ENCODE measurements at regions of chr1 and their contacts with region 1.

Region 1: GRCh38 chr1:13813398-13814012 is 113.5 kb downstream of the PRDM2 start:
- DNase-seq: peak; percentile 34 to 69 (median 54)
- ATAC-seq: peak; percentile 59
- H3K4me3 ChIP-seq: no peak overlapping the region
- H3K4me3 Mint-ChIP-seq: no peak overlapping the region
- H3K27ac ChIP-seq: no peak overlapping the region
- H3K27ac Mint-ChIP-seq: no peak overlapping the region
- H3K4me1 ChIP-seq: peaks cover 7% of the 10 kb centered on the region
- H3K4me1 Mint-ChIP-seq: peaks cover 39% of the 10 kb centered on the region
- H3K27me3 ChIP-seq: no peaks in the 10 kb centered on the region
- H3K27me3 Mint-ChIP-seq: no peaks in the 10 kb centered on the region
- CTCF ChIP-seq: peak; percentile 61

Region 2: DNA sequence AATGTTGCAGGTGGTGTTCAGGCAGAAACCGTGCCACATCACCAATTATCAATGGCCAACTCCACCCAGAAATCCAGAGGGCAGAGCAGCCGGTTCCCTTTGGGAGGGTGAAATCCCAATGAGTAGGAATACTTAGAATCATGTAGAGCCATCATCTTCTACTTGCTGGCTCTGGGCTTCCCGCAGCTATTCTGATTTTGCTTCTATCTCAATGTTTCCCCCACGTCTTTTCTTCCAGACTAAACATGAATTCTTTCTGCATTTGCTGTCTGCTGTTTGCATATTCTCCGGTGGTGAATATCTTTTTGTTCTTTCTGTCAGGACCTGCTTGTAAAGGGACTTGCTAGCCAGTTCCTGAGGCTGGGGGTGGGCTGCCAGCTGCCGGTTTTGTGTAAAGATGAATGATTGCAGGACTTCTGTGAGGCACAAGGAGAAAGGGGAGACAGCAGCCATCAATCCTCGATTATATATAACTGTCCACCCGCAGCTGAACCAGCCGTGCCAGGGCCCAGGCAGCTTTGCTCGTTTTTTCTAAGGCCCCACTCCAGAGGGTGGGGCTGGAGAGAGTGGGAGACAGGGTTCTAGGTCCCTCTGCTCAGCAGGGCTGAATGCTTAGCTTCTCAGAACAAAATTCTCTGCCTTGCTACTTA is 370.0 kb before region 1 on chr1:
- CTCF ChIA-PET with region 1: no interaction called
- POLR2A ChIA-PET with region 1: no interaction called
- intact Hi-C with region 1: no loop called
- DNase-seq: no peak
- ATAC-seq: no peak
- H3K4me3 ChIP-seq: no peak overlapping the region
- H3K4me3 Mint-ChIP-seq: no peak overlapping the region
- H3K27ac ChIP-seq: no peak overlapping the region
- H3K27ac Mint-ChIP-seq: no peak overlapping the region
- H3K4me1 ChIP-seq: no peaks in the 10 kb centered on the region
- H3K4me1 Mint-ChIP-seq: no peaks in the 10 kb centered on the region
- H3K27me3 ChIP-seq: no peaks in the 10 kb centered on the region
- H3K27me3 Mint-ChIP-seq: no peaks in the 10 kb centered on the region
- CTCF ChIP-seq: no peak

Region 3: DNA sequence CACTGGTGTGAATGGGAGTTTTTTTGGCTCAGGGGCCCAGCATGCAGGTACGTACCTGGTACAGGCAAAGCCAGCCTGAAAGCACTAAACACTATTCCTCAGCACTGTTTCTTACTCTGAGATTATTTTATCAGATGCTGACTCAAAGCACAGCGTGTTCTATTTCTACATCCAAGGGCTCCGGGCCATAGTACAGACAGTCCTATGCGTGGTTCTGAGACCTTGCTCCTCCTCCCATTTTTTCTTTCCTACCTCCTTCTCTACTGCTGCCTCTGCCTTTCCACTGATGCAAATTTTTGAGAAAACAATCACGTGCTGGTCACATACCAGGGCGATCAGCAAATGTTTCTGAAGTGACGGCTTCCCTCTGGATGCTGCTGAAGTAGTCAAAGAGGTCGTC is 193.6 kb before region 1 on chr1:
- CTCF ChIA-PET with region 1: no interaction called
- POLR2A ChIA-PET with region 1: no interaction called
- intact Hi-C with region 1: no loop called
- DNase-seq: no peak
- ATAC-seq: no peak
- H3K4me3 ChIP-seq: no peak overlapping the region
- H3K4me3 Mint-ChIP-seq: no peak overlapping the region
- H3K27ac ChIP-seq: no peak overlapping the region
- H3K27ac Mint-ChIP-seq: no peak overlapping the region
- H3K4me1 ChIP-seq: no peaks in the 10 kb centered on the region
- H3K4me1 Mint-ChIP-seq: no peaks in the 10 kb centered on the region
- H3K27me3 ChIP-seq: no peaks in the 10 kb centered on the region
- H3K27me3 Mint-ChIP-seq: peaks cover 27% of the 10 kb centered on the region
- CTCF ChIP-seq: no peak

Region 4: GRCh38 chr1:13662493-13662892 is 151.0 kb before region 1 on chr1:
- CTCF ChIA-PET with region 1: interaction called, 12 read pairs
- POLR2A ChIA-PET with region 1: no interaction called
- intact Hi-C with region 1: loop called (anchors 1 kb)
- DNase-seq: no peak
- ATAC-seq: no peak
- H3K4me3 ChIP-seq: no peak overlapping the region
- H3K4me3 Mint-ChIP-seq: no peak overlapping the region
- H3K27ac ChIP-seq: no peak overlapping the region
- H3K27ac Mint-ChIP-seq: no peak overlapping the region
- H3K4me1 ChIP-seq: peaks cover 4% of the 10 kb centered on the region
- H3K4me1 Mint-ChIP-seq: peaks cover 5% of the 10 kb centered on the region
- H3K27me3 ChIP-seq: no peaks in the 10 kb centered on the region
- H3K27me3 Mint-ChIP-seq: peaks cover 5% of the 10 kb centered on the region
- CTCF ChIP-seq: no peak

Region 5: GRCh38 chr1:13667691-13668090 is 145.8 kb before region 1 on chr1:
- CTCF ChIA-PET with region 1: interaction called, 12 read pairs
- POLR2A ChIA-PET with region 1: no interaction called
- intact Hi-C with region 1: loop called (anchors 1 kb)
- DNase-seq: no peak
- ATAC-seq: no peak
- H3K4me3 ChIP-seq: no peak overlapping the region
- H3K4me3 Mint-ChIP-seq: no peak overlapping the region
- H3K27ac ChIP-seq: no peak overlapping the region
- H3K27ac Mint-ChIP-seq: no peak overlapping the region
- H3K4me1 ChIP-seq: peaks cover 4% of the 10 kb centered on the region
- H3K4me1 Mint-ChIP-seq: peaks cover 5% of the 10 kb centered on the region
- H3K27me3 ChIP-seq: no peaks in the 10 kb centered on the region
- H3K27me3 Mint-ChIP-seq: no peaks in the 10 kb centered on the region
- CTCF ChIP-seq: no peak

Region 6: DNA sequence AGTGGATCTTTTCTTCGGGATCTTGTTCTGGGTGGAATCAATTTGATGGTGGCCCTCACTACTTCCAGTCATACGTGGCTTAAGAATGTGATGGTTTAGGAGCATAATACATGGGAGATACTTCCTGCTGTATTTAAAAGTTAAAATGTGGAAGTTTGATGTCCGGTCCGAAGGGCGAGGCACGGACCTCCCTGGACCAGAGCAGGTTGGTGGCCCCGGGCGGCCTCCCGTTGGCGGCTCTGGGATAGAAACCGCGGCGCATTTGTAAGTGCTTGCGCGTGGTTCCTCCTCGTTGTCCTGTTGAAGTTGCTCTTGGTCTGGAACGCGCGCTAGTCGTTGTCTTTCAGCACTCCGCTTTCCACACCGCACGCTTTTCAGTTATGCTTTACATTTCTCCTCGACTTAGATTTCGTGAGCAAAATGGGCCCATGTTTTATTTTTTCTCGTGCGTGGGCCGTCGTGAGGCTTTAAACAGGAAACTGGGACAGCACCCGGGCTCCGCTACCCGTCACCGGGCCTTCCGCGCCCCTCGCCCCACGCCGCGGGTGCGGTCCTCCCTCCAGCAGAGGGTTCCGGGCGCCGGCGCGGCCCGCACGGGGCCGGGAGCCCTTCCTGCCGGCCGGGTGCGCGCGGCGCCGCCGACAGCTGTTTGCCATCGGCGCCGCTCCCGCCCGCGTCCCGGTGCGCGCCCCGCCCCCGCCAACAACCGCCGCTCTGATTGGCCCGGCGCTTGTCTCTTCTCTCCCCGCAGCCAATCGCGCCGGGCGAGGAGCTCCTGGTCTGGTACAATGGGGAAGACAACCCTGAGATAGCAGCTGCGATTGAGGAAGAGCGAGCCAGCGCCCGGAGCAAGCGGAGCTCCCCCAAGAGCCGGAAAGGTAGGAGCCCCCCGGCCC is 64.6 kb before region 1 on chr1:
- CTCF ChIA-PET with region 1: interaction called, 3 read pairs
- POLR2A ChIA-PET with region 1: no interaction called
- intact Hi-C with region 1: loop called in 1 of 2 experiments (anchors 5 kb)
- DNase-seq: peak; percentile 92 to 99 (median 97)
- ATAC-seq: peak; percentile 84
- H3K4me3 ChIP-seq: peak overlapping the region; percentile 68 to 70
- H3K4me3 Mint-ChIP-seq: peak overlapping the region; percentile 94
- H3K27ac ChIP-seq: peak overlapping the region; percentile 86 to 88
- H3K27ac Mint-ChIP-seq: peak overlapping the region; percentile 98
- H3K4me1 ChIP-seq: peaks cover 48% of the 10 kb centered on the region
- H3K4me1 Mint-ChIP-seq: peaks cover 52% of the 10 kb centered on the region
- H3K27me3 ChIP-seq: no peaks in the 10 kb centered on the region
- H3K27me3 Mint-ChIP-seq: no peaks in the 10 kb centered on the region
- CTCF ChIP-seq: no peak

Region 7: DNA sequence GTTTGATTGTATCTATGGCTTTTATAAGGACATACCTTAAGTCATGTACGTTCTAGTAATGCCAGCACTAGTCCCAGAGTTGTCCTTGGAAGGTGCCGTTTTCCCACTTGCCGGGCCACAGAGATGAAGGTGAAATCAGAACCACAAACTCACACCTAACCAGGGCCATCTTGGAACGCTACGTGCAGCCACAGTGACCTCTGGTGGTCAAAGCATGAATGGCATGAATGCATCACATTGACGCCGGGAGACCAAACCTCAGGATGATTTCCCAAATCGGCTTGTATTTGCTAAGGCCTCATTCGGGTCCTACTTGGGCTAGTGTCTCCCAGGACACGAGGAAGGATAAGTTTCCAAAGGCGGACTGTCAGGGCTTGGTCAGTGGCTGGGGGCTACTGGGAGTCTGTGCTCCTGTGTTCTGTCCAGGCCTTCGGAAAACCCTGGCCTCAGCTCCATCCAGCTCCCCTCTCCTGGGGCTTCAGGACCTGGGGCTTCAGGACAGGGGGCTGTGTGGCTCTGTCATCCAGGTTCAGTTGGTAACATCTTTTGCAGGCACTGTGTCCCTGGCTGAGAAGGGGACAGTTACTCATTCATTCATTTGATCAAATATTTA is 147.0 kb after region 1 on chr1:
- CTCF ChIA-PET with region 1: interaction called, 3 read pairs
- POLR2A ChIA-PET with region 1: no interaction called
- intact Hi-C with region 1: loop called in 1 of 2 experiments (anchors 10 kb)
- DNase-seq: peak; percentile 32 to 78 (median 66)
- ATAC-seq: no peak
- H3K4me3 ChIP-seq: no peak overlapping the region
- H3K4me3 Mint-ChIP-seq: no peak overlapping the region
- H3K27ac ChIP-seq: no peak overlapping the region
- H3K27ac Mint-ChIP-seq: no peak overlapping the region
- H3K4me1 ChIP-seq: no peaks in the 10 kb centered on the region
- H3K4me1 Mint-ChIP-seq: no peaks in the 10 kb centered on the region
- H3K27me3 ChIP-seq: no peaks in the 10 kb centered on the region
- H3K27me3 Mint-ChIP-seq: peaks cover 47% of the 10 kb centered on the region
- CTCF ChIP-seq: peak; percentile 81